ENCODE measurements at regions of chr16 and their contacts with region 1.

Region 1: DNA sequence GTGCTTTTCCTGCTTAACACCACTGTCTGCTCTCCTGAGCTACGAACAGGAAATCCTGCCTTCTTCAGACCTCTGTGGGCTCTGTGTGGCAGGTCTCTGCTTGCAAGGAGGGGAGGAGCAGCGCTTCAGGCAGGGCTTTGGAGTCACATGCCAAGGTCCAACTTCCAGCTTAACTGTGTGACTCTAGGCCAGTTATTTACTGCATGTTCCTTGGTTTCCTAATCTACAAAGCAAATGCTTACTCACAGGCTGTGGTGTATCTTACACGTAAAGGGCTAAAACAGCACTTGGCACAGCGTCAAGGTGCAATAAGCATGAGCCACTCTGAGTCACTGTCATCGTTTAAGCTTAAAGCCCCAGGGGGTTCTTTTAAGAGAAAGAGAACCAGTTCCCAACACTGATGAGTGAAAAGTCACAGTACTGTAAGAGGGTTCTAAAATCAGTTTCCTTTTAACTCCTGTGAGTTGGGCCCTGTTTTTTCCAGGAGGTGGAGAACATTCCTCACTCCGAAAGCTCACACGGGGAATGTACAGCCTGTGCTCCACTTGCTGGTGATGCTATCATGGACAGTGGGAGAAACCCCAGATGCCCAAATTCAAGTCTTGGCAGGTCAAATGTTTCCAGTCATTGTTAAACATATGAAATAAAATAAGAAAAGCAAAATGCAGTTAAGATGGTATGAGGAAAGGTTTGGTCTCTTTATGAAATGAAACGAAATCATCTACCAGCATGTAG is 54.1 kb upstream of the BCAR1 start:
- DNase-seq: peak; percentile 100
- ATAC-seq: peak; percentile 94
- H3K4me3 ChIP-seq: peak overlapping the region in 1 of 2 experiments; percentile 41; a peak in 3 of 4 replicates
- H3K27ac ChIP-seq: peak overlapping the region; percentile 100
- H3K4me1 ChIP-seq: peaks cover 43 to 65% of the 10 kb centered on the region in 2 experiments
- H3K27me3 ChIP-seq: no peaks in the 10 kb centered on the region
- CTCF ChIP-seq: no peak
- POLR2A ChIP-seq: peak; percentile 34
- RAD21 ChIP-seq: peak; percentile 40

Region 2: GRCh38 chr16:75175074-75175473 is 130.5 kb before region 1 on chr16:
- CTCF ChIA-PET with region 1: no interaction called
- POLR2A ChIA-PET with region 1: no interaction called
- RAD21 ChIA-PET with region 1: no interaction called
- intact Hi-C with region 1: no loop called
- DNase-seq: no peak
- ATAC-seq: no peak
- H3K4me3 ChIP-seq: no peak overlapping the region
- H3K27ac ChIP-seq: no peak overlapping the region
- H3K4me1 ChIP-seq: no peaks in the 10 kb centered on the region
- H3K27me3 ChIP-seq: no peaks in the 10 kb centered on the region
- CTCF ChIP-seq: no peak
- POLR2A ChIP-seq: no peak
- RAD21 ChIP-seq: no peak

Region 3: GRCh38 chr16:75206749-75207451 is 98.6 kb before region 1 on chr16 and contains the start of gene CTRB2:
- CTCF ChIA-PET with region 1: no interaction called
- POLR2A ChIA-PET with region 1: no interaction called
- RAD21 ChIA-PET with region 1: no interaction called
- intact Hi-C with region 1: no loop called
- DNase-seq: no peak
- ATAC-seq: 0 out of 2 replicates have a peak, but pooled peaks have one; percentile 15
- H3K4me3 ChIP-seq: no peak within 1 kb of the TSS
- H3K27ac ChIP-seq: no peak within 1 kb of the TSS
- H3K4me1 ChIP-seq: no peaks in the 10 kb centered on the region
- H3K27me3 ChIP-seq: no peaks in the 10 kb centered on the region
- CTCF ChIP-seq: no peak
- POLR2A ChIP-seq: no peak
- RAD21 ChIP-seq: no peak
- total RNA-seq, gene CTRB2: 10.0 TPM

Region 4: DNA sequence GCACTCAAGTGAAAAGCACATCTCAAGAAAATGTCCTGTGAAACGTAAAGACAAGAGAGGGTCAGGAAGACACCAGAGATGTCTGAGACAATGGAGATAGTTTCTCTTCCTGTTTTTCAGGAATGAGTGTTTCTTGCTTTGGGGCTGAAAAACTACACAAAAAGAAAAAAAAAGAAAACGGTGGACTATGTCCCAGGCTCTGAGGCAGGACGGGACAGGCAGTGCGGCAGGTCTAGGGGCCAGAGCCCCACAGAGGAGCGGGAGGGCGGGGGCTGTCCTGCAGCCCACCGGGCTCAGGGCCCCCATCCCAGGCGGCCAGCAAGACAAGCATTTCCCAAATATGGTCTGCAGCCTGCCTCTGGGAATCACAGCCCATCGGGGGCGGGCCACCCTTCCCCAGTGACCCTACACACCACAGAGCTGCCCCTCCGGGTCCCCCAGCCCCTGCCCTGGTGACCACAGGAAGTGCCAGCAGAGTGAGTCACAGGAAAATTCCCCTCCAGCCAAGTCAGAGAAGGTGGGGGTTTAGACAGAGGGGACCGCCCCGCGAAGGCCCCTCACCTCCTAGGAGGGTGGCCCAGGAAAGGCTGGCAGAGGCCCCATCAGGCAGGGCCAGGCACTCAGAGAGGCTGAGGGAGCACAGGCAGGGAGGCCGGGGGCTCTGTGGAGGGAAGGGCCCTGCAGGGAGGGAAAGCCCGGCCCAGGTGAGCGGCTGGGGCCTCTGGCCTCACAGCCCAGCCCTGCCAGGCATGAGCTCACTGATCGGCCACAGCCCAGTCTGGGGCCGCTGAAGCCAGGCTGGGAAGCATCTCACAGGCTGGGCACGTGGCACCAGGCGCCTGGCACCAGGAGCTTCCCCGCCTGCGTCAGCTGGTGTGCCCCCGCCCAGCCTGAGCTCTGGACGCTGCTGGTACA is 60.4 kb before region 1 on chr16:
- CTCF ChIA-PET with region 1: no interaction called
- POLR2A ChIA-PET with region 1: interaction called, 10 read pairs
- RAD21 ChIA-PET with region 1: interaction called, 4 to 10 read pairs
- intact Hi-C with region 1: no loop called
- DNase-seq: no peak
- ATAC-seq: peak; percentile 77
- H3K4me3 ChIP-seq: peak overlapping the region; percentile 7 to 30; a peak in 2 of 4 replicates
- H3K27ac ChIP-seq: peak overlapping the region; percentile 97
- H3K4me1 ChIP-seq: peaks cover 68 to 69% of the 10 kb centered on the region in 2 experiments
- H3K27me3 ChIP-seq: no peaks in the 10 kb centered on the region
- CTCF ChIP-seq: no peak
- POLR2A ChIP-seq: no peak
- RAD21 ChIP-seq: no peak

Region 5: DNA sequence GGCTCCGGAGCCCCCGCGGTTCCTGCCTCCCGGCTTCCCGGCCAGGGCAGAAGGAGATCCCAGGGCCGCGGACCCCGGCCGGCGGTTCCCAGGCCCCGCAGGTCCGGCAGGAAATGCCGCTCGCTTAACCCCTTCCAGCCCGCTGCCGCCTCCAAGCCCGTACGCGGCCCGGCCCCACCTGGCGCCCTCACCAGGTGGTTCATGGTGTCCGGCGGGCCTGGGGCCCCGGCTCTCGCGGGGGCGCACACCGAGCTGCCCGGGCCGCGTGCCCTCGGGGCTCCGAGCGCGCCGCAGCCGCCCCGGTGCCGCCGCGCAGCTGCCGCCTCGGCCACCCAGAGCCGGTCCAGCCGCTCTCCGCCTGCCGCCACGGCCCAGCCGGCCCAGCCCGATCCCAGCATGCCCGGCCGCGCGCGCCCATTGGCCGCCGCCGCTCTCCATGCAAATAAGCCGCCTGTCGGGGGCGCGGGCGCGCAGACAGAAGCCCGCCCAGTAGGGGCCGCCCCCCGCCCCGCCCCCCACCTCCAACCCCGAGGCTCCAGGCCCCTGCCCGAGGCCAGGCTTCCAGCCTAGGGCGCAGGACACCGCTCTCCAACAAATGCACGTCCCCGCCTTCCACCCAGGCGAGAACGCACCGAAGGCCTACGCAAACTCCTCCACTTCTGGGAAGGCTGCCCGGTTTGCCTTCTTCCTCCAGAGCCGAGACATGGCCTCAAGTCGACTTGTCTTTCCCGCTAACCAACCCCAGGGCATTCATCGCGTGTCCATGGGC is 54.1 kb before region 1 on chr16 and contains the start of gene BCAR1:
- CTCF ChIA-PET with region 1: no interaction called
- POLR2A ChIA-PET with region 1: interaction called, 5 read pairs
- RAD21 ChIA-PET with region 1: interaction called in 1 of 2 experiments, 3 read pairs
- intact Hi-C with region 1: loop called (anchors 1 kb)
- DNase-seq: no peak
- ATAC-seq: peak; percentile 88
- H3K4me3 ChIP-seq: peak within 1 kb of the TSS; percentile 73 to 87
- H3K27ac ChIP-seq: peak within 1 kb of the TSS; percentile 93
- H3K4me1 ChIP-seq: peaks cover 57 to 85% of the 10 kb centered on the region in 2 experiments
- H3K27me3 ChIP-seq: no peaks in the 10 kb centered on the region
- CTCF ChIP-seq: peak in 1 of 3 experiments; percentile 1; a peak in 1 of 6 replicates
- POLR2A ChIP-seq: peak; percentile 57
- RAD21 ChIP-seq: no peak
- total RNA-seq, gene BCAR1: 49.6 TPM

Region 6: GRCh38 chr16:75265845-75266701 is 39.5 kb before region 1 on chr16:
- CTCF ChIA-PET with region 1: no interaction called
- POLR2A ChIA-PET with region 1: interaction called, 11 read pairs
- RAD21 ChIA-PET with region 1: interaction called, 3 to 7 read pairs
- intact Hi-C with region 1: no loop called
- DNase-seq: no peak
- ATAC-seq: peak; percentile 68
- H3K4me3 ChIP-seq: peak overlapping the region; percentile 82 to 91
- H3K27ac ChIP-seq: peak overlapping the region; percentile 88
- H3K4me1 ChIP-seq: peaks cover 50 to 71% of the 10 kb centered on the region in 2 experiments
- H3K27me3 ChIP-seq: no peaks in the 10 kb centered on the region
- CTCF ChIP-seq: no peak
- POLR2A ChIP-seq: no peak
- RAD21 ChIP-seq: no peak

Region 7: DNA sequence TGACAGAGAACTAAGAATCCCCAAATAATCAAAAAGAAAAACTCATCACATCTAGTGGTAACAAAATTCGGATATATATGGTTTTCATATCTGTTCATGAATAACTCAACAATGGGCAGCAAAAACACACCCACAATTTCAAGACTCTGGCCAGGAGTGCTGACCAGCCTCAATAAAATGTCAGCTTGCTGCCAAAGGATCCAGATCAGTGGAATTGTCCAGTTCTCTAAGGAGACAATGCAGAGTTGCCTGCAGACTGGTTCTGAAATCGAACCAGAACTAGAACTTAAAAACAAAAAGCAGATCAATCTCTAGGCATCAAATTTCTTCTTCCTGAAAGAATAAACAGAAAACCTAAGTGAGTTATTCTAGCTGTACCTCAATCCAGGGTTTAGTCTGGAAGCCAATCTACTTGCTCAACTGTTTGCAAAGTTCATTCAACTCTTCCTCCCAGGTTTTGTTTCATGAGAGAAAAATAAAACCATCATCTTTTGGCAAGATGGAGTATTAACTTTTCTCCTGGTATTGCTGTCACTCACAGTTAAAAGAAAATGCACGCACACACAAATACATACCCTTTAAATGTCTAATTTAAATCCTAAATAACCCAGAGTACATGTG is 66.8 kb after region 1 on chr16:
- CTCF ChIA-PET with region 1: no interaction called
- POLR2A ChIA-PET with region 1: no interaction called
- RAD21 ChIA-PET with region 1: no interaction called
- intact Hi-C with region 1: no loop called
- DNase-seq: no peak
- ATAC-seq: no peak
- H3K4me3 ChIP-seq: no peak overlapping the region
- H3K27ac ChIP-seq: no peak overlapping the region
- H3K4me1 ChIP-seq: peaks cover 0 to 8% of the 10 kb centered on the region in 2 experiments; a peak in 1 of 4 replicates
- H3K27me3 ChIP-seq: no peaks in the 10 kb centered on the region
- CTCF ChIP-seq: no peak
- POLR2A ChIP-seq: no peak
- RAD21 ChIP-seq: no peak

Region 8: DNA sequence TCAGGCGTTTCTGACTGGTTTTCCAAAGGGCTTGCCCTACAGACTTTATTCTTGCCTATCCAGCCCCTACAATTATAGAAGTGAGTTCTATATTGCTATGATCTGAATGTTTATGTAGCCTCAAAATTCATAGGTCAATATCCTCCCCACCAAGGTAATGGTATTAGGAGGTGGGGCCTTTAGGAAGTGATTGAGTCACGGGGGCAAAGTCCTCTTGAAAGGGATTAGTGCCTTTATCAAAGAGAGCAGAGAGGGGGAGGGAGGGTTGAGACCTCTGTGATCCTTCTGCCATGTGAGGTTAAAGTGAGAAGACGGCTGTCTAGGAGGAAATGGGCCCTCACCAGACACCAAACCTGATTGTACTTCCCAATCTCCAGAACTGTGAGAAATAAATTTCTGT is 421.7 kb after region 1 on chr16:
- CTCF ChIA-PET with region 1: no interaction called
- POLR2A ChIA-PET with region 1: no interaction called
- RAD21 ChIA-PET with region 1: no interaction called
- intact Hi-C with region 1: no loop called
- DNase-seq: no peak
- ATAC-seq: no peak
- H3K4me3 ChIP-seq: no peak overlapping the region
- H3K27ac ChIP-seq: no peak overlapping the region
- H3K4me1 ChIP-seq: no peaks in the 10 kb centered on the region; a peak in 1 of 4 replicates
- H3K27me3 ChIP-seq: no peaks in the 10 kb centered on the region
- CTCF ChIP-seq: no peak
- POLR2A ChIP-seq: no peak
- RAD21 ChIP-seq: no peak

Measured in HCT116 (cell line).